Activated naive CD8-positive, alpha-beta T cell treated with anti-CD3 and anti-CD28 coated beads, Interleukin-2, amount 10 ng/mL, durations not matched to agents 7 days and 5 days (primary cell): ENCODE measurements at regions of chr4 and their contacts with region 1.

Region 1: DNA sequence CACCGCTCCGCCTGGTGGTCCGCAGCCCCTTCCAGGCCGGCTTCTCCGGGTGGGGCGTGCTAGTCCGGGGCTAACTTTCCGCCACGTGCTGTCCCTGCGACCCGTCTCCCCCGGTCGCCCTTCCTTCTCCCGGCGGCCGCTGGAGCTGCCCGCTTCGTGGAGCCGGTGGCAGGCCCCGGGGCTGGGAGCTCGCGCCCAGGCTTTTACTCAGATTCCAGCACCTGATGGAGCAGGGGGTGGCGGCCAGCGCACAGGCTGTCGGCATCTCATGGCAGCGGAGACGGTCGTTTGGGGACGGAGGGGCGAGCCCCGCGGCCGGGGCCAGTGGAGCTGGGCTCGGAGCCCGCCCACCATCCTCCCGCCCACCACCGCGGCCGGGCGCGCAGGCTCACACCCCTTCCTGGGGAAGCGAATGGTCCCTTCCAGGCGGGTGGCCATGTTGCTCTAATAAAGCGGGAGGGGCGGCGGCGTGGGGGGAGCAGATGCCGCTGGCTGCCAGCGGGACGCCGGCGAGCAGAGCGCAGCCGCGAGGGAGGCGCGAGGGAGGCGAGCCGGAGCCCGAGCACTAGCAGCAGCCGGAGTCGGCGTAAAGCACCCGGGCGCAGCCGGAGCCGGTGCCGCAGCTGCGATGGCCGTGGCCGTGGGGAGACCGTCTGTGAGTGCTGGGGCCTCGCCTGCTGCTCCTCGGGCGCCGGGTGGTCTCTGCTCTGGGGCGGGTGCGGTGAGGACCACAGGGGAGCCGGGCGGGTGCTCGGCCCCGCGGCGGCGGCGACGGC is at the start of gene SEPTIN11:
- DNase-seq: peak; percentile 85
- ATAC-seq: peak; percentile 67
- H3K4me3 Mint-ChIP-seq: peak within 1 kb of the TSS; percentile 96
- H3K27ac Mint-ChIP-seq: peak within 1 kb of the TSS; percentile 77
- H3K4me1 Mint-ChIP-seq: peaks cover 20% of the 10 kb centered on the region
- H3K27me3 Mint-ChIP-seq: peaks cover 4% of the 10 kb centered on the region
- total RNA-seq, gene SEPTIN11: 51.9 to 60.0 TPM

Region 2: GRCh38 chr4:76987153-76987587 is 37.7 kb after region 1 on chr4:
- POLR2A ChIA-PET with region 1: interaction called, 22 read pairs
- DNase-seq: no peak
- ATAC-seq: no peak
- H3K4me3 Mint-ChIP-seq: no peak overlapping the region
- H3K27ac Mint-ChIP-seq: no peak overlapping the region
- H3K4me1 Mint-ChIP-seq: peaks cover 60% of the 10 kb centered on the region
- H3K27me3 Mint-ChIP-seq: no peaks in the 10 kb centered on the region